Activated T-helper 1 cell treated with anti-CD3 and anti-CD28 coated beads, Interleukin-12 subunit alpha, Interleukin-12 subunit beta, Interleukin-2, Interleukin-4 antibody, amounts not matched to agents 30 ng/mL and 10 ng/mL and 1 ng/mL, durations not matched to agents 14 hours and 24 hours and 36 hours (primary cell): ENCODE measurements at regions of chr9 and their contacts with region 1.

Region 1: DNA sequence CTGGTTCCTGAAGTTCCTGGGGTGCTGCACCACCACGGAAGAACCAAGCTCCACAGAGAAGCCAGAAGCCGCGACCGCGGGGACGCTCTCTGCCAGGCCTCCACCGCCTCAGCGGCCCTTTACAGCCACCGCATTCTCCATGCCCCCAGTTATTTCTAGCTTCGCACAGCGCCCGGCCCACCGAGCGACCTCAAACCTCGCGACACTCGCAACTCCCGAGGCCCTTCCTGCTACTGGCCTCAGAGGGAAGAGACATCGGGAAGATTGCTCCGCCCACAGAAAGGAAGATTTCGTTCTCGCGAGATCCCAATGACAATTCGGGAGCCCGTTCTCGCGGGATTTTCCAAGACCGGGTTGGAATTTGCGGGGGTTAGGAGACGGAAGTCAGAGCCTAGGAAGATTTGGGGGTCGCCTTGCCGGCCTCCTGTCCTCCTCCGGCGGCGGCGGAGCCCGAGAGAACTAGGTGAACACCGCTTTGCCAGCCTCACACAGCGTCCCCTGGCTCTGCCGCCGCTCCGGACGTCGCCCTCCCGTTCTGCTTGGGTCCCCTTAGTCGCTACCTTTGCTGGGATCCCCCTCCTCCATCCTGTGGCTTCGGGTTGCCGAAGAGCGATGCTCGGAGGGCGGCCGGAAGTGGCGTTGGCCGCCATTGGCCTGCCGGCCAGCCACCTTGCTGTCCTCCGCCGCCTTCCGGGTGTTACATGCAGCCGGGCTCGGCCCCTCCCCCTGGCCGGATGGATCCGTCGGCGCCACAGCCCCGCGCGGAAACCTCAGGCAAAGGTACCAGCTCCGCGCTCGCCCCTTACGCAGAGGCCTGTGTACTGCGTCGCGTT is at the start of gene ERCC6L2:
- DNase-seq: peak; percentile 92
- H3K4me3 Mint-ChIP-seq: no peak within 1 kb of the TSS
- H3K27ac Mint-ChIP-seq: no peak within 1 kb of the TSS
- H3K4me1 Mint-ChIP-seq: peaks cover 33% of the 10 kb centered on the region
- H3K27me3 Mint-ChIP-seq: no peaks in the 10 kb centered on the region
- total RNA-seq, gene ERCC6L2: 31.2 and 33.7 TPM in 2 replicates

Region 2: GRCh38 chr9:95167998-95168397 is 707.5 kb before region 1 on chr9:
- intact Hi-C with region 1: loop called (anchors 10 kb)
- DNase-seq: peak; percentile 47
- H3K4me3 Mint-ChIP-seq: peak overlapping the region; percentile 3
- H3K27ac Mint-ChIP-seq: peak overlapping the region; percentile 61
- H3K4me1 Mint-ChIP-seq: peaks cover 48% of the 10 kb centered on the region
- H3K27me3 Mint-ChIP-seq: no peaks in the 10 kb centered on the region

Region 3: GRCh38 chr9:95510709-95511615 is 364.6 kb before region 1 on chr9:
- intact Hi-C with region 1: loop called (anchors 1 kb)
- DNase-seq: peak; percentile 82
- H3K4me3 Mint-ChIP-seq: peak overlapping the region; percentile 84
- H3K27ac Mint-ChIP-seq: peak overlapping the region; percentile 88
- H3K4me1 Mint-ChIP-seq: peaks cover 41% of the 10 kb centered on the region
- H3K27me3 Mint-ChIP-seq: peaks cover 61% of the 10 kb centered on the region

Region 4: GRCh38 chr9:95574176-95574575 is 301.3 kb before region 1 on chr9:
- intact Hi-C with region 1: no loop called
- DNase-seq: no peak
- H3K4me3 Mint-ChIP-seq: no peak overlapping the region
- H3K27ac Mint-ChIP-seq: no peak overlapping the region
- H3K4me1 Mint-ChIP-seq: peaks cover 13% of the 10 kb centered on the region
- H3K27me3 Mint-ChIP-seq: peaks cover 41% of the 10 kb centered on the region

Region 5: DNA sequence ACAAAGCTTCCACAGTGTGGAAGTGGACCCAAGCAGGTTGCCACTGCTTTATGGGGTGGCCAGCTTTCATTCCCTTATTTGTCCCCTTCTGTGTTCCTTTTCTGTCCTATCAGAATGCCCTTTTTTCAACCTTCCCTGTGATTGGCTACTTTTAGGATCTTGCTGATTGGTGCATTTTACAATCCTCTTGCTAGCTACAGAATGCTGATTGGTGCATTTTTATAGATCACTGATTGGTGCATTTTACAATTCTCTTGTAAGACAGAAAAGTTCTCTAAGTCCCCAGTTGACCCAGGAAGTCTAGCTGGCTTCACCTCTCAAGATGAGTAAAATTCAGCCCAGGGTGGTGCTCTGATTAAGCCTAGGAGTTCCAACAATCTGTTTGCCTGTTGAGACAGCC is 157.3 kb before region 1 on chr9:
- intact Hi-C with region 1: no loop called
- DNase-seq: no peak
- H3K4me3 Mint-ChIP-seq: no peak overlapping the region
- H3K27ac Mint-ChIP-seq: no peak overlapping the region
- H3K4me1 Mint-ChIP-seq: peaks cover 5% of the 10 kb centered on the region
- H3K27me3 Mint-ChIP-seq: peaks cover 19% of the 10 kb centered on the region

Region 6: DNA sequence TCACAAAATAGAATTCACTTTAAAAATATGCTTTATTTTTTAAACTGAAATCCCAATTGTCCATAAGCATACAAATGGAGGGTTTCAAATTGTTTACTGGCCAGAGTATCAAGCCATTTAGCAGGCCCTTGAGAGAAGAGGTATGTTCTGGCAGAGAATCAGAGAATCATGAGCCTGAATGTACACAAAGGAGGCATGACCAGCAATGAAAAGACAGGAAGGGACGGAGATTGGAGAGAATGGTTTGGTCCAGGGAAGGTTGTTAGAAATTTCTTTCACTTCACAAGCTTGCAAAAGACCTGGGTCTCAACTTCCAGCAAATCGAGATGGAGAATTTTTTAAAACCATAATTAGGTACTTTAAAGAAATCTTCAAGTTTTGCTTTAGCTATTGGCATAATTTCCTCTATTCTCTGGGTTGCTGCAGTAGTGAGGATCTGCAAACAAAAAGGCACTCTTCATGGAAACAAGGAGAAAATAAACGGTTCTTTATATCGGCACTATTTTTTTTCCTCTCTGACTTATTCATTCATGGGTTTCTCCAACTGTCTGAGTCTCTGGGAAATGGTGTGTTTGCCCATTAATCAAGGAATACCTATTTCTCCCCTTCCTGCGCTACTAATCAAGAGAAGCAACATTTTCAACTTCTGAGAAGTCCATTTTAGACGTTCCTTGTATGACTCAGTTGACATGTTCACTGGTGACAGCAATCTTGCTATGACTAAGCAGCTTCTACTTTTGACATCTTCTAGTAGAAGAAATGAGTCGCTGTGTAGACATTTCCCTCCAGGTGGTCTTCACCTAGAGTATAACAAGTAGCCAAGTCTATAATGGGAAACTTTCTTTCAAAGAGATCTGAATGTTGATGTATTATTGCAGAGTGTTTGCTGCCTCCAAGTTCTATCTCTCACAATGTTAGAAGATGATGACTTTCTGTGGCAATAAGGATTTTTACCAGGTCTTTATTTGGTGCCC is 23.2 kb before region 1 on chr9:
- intact Hi-C with region 1: loop called (anchors 1 kb)
- DNase-seq: peak; percentile 27
- H3K4me3 Mint-ChIP-seq: peak overlapping the region; percentile 27
- H3K27ac Mint-ChIP-seq: peak overlapping the region; percentile 10
- H3K4me1 Mint-ChIP-seq: peaks cover 39% of the 10 kb centered on the region
- H3K27me3 Mint-ChIP-seq: no peaks in the 10 kb centered on the region

Region 7: DNA sequence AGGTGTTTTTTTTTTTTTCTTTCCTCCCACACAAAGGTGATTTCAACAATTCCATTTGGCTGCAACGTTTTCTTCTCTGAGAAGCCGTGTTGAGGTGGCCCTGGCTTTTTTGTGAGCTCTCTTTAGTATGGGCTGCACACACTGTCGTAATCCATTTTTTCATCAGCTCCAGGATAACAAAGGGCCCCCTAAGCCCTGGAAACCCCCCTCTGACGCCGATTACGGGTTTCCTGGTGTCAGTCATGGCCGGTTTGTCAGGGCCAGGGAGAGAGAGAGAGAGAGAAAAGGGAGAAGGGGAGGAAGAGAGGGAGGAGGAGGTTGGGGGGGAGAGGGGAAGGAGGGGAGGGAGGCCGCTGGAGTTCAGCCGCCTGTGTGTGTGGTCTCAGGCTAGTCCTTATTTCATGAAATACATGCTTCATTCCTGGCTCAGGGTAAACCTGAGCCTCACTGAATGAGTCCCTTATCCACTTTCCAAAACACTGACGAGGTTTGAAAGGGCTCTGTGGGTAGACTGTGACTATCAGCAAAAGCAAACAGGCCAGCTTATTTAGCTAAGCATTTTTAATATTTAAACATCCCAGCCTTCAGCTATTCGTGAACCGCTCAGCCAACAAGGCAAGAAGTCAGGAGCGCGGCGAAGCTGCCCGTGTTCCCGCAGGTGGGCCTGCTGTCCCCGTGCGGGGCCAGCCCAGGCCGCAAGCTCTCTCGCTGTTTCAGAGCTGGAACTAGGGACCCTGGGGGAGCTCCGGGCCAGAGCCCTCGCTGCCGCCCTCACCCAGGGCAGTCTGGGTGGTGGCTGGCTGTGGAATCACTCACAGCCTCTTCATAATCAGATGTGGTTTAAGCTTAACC is 172.8 kb after region 1 on chr9:
- intact Hi-C with region 1: loop called (anchors 5 kb)
- DNase-seq: no peak
- H3K4me3 Mint-ChIP-seq: peak overlapping the region; percentile 5
- H3K27ac Mint-ChIP-seq: peak overlapping the region; percentile 86
- H3K4me1 Mint-ChIP-seq: peaks cover 8% of the 10 kb centered on the region
- H3K27me3 Mint-ChIP-seq: peaks cover 11% of the 10 kb centered on the region